Activated CD4-positive, alpha-beta T cell treated with anti-CD3 and anti-CD28 coated beads, Interleukin-2, amount 10 ng/mL, durations not matched to agents 24 days and 14 days (primary cell): ENCODE measurements at regions of chr1 and their contacts with region 1.

Region 1: DNA sequence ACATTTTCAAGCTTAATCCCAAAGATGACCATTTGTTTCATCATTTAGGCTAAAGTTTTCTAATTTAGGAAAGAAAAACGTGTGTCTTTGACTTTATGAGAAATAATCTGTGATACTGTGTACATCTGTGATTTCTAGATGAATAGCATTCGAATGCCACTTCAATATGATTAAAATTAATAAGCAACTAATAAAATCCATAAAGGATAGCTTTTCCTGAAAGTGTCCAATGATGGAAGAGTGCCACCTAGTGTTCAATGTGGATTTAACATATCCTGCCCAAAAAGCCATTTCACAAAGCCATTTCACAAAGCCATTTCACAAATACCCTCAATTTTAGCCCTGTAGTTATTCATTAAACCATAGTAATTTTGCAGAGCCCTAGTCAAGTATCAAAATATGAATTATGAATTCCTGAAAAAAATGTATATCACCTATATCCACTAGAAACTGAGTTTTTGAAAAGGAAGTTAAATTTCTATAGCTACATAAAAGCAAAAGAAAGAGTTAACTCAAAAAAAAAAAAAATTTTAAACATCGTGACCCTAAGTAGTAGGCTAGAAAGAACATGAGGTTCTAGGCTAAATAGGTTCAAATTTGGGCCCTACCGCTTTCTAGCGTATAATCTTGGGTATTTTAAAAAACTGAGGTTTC is 19.1 kb downstream of the NME7 start:
- DNase-seq: peak; percentile 80
- H3K4me3 Mint-ChIP-seq: no peak overlapping the region
- H3K27ac Mint-ChIP-seq: no peak overlapping the region
- H3K4me1 Mint-ChIP-seq: peaks cover 11% of the 10 kb centered on the region
- H3K27me3 Mint-ChIP-seq: no peaks in the 10 kb centered on the region

Region 2: DNA sequence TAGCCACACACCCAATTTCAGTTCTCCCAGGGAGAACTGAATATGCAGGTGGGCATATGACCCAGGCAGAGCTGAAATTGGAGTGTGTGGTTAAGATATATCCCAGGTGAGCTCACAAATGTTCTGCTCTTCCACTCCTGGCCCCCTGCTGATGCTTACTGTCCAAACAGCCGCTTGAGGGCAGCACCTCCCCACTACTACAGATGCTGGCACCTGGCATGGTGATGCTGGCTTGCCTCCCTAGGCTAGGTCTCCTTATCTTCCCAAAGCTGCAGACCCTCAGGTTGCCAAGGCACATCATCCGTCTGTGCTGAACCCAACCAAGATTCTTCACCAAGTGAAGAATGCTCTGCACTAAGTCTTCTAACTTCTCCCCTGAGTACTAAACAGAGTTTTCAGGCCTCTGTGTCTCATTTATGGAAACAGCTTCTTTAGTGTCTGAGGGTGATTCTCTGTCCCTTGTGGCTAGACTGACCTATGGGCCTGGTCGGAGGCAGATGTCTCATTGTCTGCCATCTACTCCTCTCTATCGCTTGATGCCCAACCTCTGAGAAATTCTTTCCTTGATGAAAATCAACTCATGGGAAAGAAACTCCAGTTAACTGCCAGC is 744.9 kb before region 1 on chr1:
- intact Hi-C with region 1: loop called (anchors 1 kb)
- DNase-seq: peak; percentile 89
- H3K4me3 Mint-ChIP-seq: no peak overlapping the region
- H3K27ac Mint-ChIP-seq: no peak overlapping the region
- H3K4me1 Mint-ChIP-seq: peaks cover 2% of the 10 kb centered on the region
- H3K27me3 Mint-ChIP-seq: peaks cover 15% of the 10 kb centered on the region

Region 3: GRCh38 chr1:169091480-169091941 is 257.0 kb before region 1 on chr1:
- intact Hi-C with region 1: loop called (anchors 5 kb)
- DNase-seq: no peak
- H3K4me3 Mint-ChIP-seq: no peak overlapping the region
- H3K27ac Mint-ChIP-seq: no peak overlapping the region
- H3K4me1 Mint-ChIP-seq: peaks cover 9% of the 10 kb centered on the region
- H3K27me3 Mint-ChIP-seq: peaks cover 7% of the 10 kb centered on the region

Region 4: DNA sequence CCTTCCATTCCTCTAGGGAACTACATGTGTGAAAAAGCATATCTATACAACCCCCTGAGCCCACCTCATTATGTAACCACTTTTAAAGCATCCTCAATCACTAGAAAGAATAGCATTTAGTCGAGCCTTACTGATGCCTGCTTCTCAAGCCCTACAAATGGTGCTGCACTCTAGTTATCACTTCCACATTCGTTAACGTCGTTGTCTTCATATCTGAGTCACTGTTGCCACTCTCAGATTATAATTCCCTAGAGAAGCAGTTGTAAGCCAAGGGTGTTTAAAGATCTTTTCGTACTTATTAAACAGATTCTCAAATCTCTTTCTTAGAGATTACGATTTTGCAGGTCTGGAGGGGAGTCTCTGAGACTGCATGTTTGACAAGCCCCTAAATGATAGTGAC is 225.5 kb before region 1 on chr1:
- intact Hi-C with region 1: no loop called
- DNase-seq: no peak
- H3K4me3 Mint-ChIP-seq: no peak overlapping the region
- H3K27ac Mint-ChIP-seq: no peak overlapping the region
- H3K4me1 Mint-ChIP-seq: peaks cover 5% of the 10 kb centered on the region
- H3K27me3 Mint-ChIP-seq: no peaks in the 10 kb centered on the region

Region 5: DNA sequence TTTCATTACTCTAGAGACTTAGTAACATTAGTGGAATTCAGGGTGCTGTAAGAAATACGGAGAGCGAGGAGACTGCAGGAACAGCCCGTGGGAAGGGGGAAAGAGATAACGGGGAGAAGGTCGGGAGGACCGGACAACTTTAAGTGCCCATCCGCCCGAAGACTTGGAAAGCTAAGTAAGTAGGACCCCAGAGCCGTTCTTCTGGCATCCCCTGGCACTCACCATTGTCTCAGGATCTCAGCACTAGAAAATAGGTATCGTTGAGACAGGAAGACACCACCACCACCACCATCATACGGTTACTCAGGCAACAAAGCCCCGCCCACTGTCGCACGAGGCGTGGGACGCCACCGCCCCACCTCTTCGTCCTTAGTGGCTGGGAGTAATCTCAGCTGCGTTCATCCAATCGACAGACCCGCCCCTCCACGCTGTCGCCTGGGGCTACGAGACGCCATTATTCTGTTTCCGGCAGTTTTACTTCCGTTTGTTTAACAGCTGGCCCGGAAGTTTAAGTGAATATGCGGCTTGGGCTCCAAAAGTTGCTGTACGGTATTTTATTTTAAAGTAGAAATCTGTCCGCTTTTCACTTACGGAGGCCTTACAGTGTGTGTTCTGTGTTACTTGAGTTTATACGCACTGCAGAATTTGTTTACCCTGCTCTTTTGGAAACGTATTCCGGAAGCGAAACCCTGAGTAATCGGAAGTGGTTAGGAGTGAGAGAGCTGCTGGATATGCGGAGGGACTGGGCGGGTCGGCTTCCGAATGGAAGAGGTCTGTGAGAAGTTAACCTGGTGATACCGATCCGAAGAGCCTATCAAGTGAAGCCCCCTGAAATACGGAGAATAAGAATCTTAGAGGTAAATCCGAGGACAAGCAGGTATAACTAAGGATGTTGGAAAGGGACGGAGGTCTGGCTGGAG is 19.2 kb after region 1 on chr1 and contains the starts of genes BLZF1 and NME7:
- intact Hi-C with region 1: no loop called
- DNase-seq: peak; percentile 100
- H3K4me3 Mint-ChIP-seq: peak within 1 kb of the TSS; percentile 73
- H3K27ac Mint-ChIP-seq: peak within 1 kb of the TSS; percentile 26
- H3K4me1 Mint-ChIP-seq: peaks cover 35% of the 10 kb centered on the region
- H3K27me3 Mint-ChIP-seq: no peaks in the 10 kb centered on the region
- total RNA-seq, gene BLZF1: 11.2 and 11.3 TPM in 2 replicates
- total RNA-seq, gene NME7: 10.6 and 13.8 TPM in 2 replicates